Ovary (tissue), 10 donors: ENCODE measurements at regions of chr4 and their contacts with region 1.

Region 1: GRCh38 chr4:87973283-87974169 is 2.0 kb upstream of the SPP1 start:
- DNase-seq: peak; percentile 37 to 64 (median 46)
- H3K4me3 ChIP-seq: no peak overlapping the region
- H3K27ac ChIP-seq: no peak overlapping the region
- H3K4me1 ChIP-seq: no peaks in the 10 kb centered on the region
- H3K27me3 ChIP-seq: no peaks in the 10 kb centered on the region
- CTCF ChIP-seq: peak in 2 of 3 donors; percentile 58 to 60
- EP300 ChIP-seq: no peak
- POLR2A ChIP-seq: no peak

Region 2: GRCh38 chr4:87856816-87857215 is 116.7 kb before region 1 on chr4:
- intact Hi-C with region 1: loop called in 3 of 4 experiments (anchors 5 to 10 kb)
- DNase-seq: no peak
- H3K4me3 ChIP-seq: no peak overlapping the region
- H3K27ac ChIP-seq: no peak overlapping the region
- H3K4me1 ChIP-seq: no peaks in the 10 kb centered on the region
- H3K27me3 ChIP-seq: no peaks in the 10 kb centered on the region
- CTCF ChIP-seq: no peak
- EP300 ChIP-seq: no peak
- POLR2A ChIP-seq: no peak

Region 3: GRCh38 chr4:87932718-87933141 is 40.8 kb before region 1 on chr4:
- intact Hi-C with region 1: no loop called
- DNase-seq: no peak
- H3K4me3 ChIP-seq: no peak overlapping the region
- H3K27ac ChIP-seq: no peak overlapping the region
- H3K4me1 ChIP-seq: no peaks in the 10 kb centered on the region
- H3K27me3 ChIP-seq: no peaks in the 10 kb centered on the region
- CTCF ChIP-seq: no peak
- EP300 ChIP-seq: no peak
- POLR2A ChIP-seq: no peak